ENCODE measurements at regions of chr14 and their contacts with region 1.

Region 1: DNA sequence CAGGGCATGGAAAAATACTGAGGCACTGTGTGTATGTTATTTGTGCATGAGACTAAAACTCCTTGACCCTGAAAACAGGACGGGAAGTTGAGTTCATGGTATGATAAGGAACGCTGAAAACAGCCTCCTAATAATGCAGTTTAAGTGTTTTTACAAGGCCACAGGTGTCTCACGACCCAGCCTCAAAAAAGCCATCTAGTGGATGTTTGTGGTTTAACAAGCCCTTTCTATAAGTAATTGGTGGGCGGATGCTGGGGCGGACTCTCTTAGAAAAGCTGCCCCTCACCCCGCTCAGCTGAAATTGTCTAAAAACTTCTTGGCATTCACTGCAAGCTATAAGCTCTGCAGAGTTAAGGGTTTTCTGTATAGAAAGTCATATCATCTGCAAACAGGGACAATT is 184.5 kb downstream of the NUBPL start:
- DNase-seq: no peak
- H3K4me3 ChIP-seq: no peak overlapping the region
- H3K27ac ChIP-seq: no peak overlapping the region
- H3K4me1 ChIP-seq: no peaks in the 10 kb centered on the region
- H3K27me3 ChIP-seq: no peaks in the 10 kb centered on the region
- CTCF ChIP-seq: no peak

Region 2: DNA sequence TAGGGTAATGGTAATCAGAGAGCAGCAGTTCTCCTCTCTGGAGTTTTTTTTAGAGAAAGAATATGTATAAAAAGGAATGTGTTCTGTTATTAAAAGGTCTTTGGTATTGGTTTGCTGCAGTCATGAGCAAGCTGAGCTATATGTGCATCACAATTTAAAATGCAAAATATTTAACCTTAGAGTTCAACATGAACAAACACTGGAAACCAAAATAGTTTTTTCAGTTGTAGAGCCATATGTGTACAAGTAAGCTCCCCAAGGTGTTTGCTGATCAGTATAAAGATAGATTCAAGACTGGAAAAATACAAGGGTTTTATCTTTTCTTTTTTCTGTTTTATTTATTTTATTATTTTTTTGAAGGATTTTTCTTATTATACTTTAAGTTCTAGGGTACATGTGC is 60.5 kb after region 1 on chr14:
- CTCF ChIA-PET with region 1: no interaction called
- POLR2A ChIA-PET with region 1: no interaction called
- intact Hi-C with region 1: loop called (anchors 10 kb)
- DNase-seq: no peak
- H3K4me3 ChIP-seq: no peak overlapping the region
- H3K27ac ChIP-seq: no peak overlapping the region
- H3K4me1 ChIP-seq: no peaks in the 10 kb centered on the region
- H3K27me3 ChIP-seq: no peaks in the 10 kb centered on the region
- CTCF ChIP-seq: no peak

Region 3: DNA sequence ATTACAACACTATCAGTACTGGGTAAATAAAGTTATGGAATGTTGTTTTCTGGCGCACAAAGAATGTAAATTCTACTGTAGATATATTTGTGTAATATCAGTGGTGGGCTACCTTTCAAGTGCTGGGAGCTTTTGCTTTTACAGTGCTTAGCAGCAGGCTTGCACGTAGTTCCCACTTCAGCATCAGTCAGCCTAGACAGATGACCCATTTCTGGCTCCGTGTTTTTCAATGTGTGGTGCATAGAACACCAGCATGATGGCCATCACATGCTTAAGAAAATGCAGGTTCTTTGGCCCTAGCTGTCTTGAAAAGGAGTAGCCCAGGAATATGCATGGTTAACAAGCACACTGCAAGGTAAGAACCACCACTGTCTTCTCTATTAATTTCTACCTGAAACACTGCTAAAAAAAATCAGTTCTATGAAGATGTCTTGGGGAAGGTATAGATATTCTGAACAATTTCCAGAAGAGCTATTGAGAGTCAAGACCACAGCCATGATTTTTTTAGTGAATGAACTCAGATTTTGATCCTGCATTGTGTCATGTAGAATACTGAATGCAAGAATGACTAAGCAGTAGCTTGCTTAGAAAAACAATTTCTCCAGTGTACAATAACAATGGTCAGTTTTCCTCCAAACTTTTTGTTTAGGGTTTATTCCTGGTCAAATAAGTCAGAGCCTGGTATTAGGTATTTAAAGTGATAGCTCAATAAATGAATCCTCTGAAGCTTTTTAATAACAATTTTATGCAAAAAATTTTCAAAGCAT is 779.1 kb after region 1 on chr14:
- CTCF ChIA-PET with region 1: no interaction called
- POLR2A ChIA-PET with region 1: interaction called, 19 read pairs
- intact Hi-C with region 1: no loop called
- DNase-seq: no peak
- H3K4me3 ChIP-seq: no peak overlapping the region
- H3K27ac ChIP-seq: no peak overlapping the region
- H3K4me1 ChIP-seq: peaks cover 8% of the 10 kb centered on the region; the same call in 1 of the 2 replicates
- H3K27me3 ChIP-seq: no peaks in the 10 kb centered on the region
- CTCF ChIP-seq: no peak